Activated naive CD4-positive, alpha-beta T cell treated with anti-CD3 and anti-CD28 coated beads for 36 hours (primary cell): ENCODE measurements at regions of chr14 and their contacts with region 1.

Region 1: GRCh38 chr14:58199726-58200479 is at the start of gene ACTR10:
- DNase-seq: peak; percentile 89
- H3K4me3 Mint-ChIP-seq: peak within 1 kb of the TSS; percentile 93
- H3K27ac Mint-ChIP-seq: peak within 1 kb of the TSS; percentile 87
- H3K4me1 Mint-ChIP-seq: peaks cover 39% of the 10 kb centered on the region
- H3K27me3 Mint-ChIP-seq: no peaks in the 10 kb centered on the region
- total RNA-seq, gene ACTR10: 29.5 to 29.7 TPM

Region 2: GRCh38 chr14:56471056-56471455 is 1728.8 kb before region 1 on chr14:
- CTCF ChIA-PET with region 1: no interaction called
- intact Hi-C with region 1: no loop called
- DNase-seq: no peak
- H3K4me3 Mint-ChIP-seq: no peak overlapping the region
- H3K27ac Mint-ChIP-seq: no peak overlapping the region
- H3K4me1 Mint-ChIP-seq: no peaks in the 10 kb centered on the region
- H3K27me3 Mint-ChIP-seq: peaks cover 13% of the 10 kb centered on the region

Region 3: DNA sequence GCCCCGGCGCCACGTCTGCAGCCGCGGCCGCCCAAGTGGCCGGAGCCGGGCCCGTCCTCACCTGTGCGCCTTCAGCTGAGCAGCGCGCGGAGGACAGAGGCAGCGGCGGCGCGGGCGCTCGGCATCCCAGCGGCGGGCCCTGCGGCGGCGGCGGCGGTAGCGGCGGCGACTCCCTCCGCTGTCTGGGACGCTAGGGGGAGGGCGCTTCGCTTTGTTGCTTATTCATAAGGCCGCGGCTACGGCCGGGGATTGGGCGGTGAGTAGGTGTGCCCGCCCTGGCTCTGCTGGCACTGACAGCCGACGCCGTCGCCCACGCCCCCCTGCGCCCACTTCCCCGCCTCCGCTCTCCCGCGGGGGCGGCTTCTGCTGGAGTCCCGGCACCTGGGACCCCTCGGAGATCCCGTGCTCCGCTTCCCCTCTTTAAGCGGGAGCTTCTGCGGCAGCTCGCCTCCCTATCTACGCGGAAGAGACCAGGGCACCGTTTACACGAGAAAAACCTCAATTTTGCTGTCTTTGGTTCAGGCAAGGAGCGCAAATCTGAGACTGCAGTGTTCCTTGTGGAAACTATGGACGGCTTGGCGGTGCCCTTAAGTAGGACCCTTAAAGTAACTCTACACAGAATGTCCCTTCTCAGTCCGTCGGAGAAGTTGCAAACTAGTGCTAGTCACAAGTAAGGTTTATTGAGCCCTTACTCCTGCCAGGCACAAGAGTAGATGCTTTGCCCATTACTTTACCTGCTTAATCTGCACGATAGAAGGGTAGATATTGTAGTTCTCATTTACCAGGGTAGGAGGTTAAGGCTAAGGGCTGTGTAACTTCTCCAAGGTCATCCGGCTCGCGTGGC is 47.7 kb before region 1 on chr14 and contains the start of gene ARMH4:
- CTCF ChIA-PET with region 1: no interaction called
- intact Hi-C with region 1: loop called (anchors 2 kb)
- DNase-seq: peak; percentile 75
- H3K4me3 Mint-ChIP-seq: peak within 1 kb of the TSS; percentile 70
- H3K27ac Mint-ChIP-seq: no peak within 1 kb of the TSS
- H3K4me1 Mint-ChIP-seq: peaks cover 11% of the 10 kb centered on the region
- H3K27me3 Mint-ChIP-seq: peaks cover 53% of the 10 kb centered on the region
- total RNA-seq, gene ARMH4: 0.43 TPM in 1 of 2 experiments, not detected in the other

Region 4: GRCh38 chr14:58239244-58240195 is 39.6 kb after region 1 on chr14:
- CTCF ChIA-PET with region 1: interaction called, 3 read pairs
- intact Hi-C with region 1: loop called (anchors 1 kb)
- DNase-seq: peak; percentile 88
- H3K4me3 Mint-ChIP-seq: no peak overlapping the region
- H3K27ac Mint-ChIP-seq: no peak overlapping the region
- H3K4me1 Mint-ChIP-seq: peaks cover 22% of the 10 kb centered on the region
- H3K27me3 Mint-ChIP-seq: no peaks in the 10 kb centered on the region

Region 5: GRCh38 chr14:58244556-58245387 is 44.9 kb after region 1 on chr14 and contains the start of gene PSMA3:
- CTCF ChIA-PET with region 1: interaction called, 3 read pairs
- intact Hi-C with region 1: loop called (anchors 1 kb)
- DNase-seq: peak; percentile 99
- H3K4me3 Mint-ChIP-seq: peak within 1 kb of the TSS; percentile 98
- H3K27ac Mint-ChIP-seq: peak within 1 kb of the TSS; percentile 99
- H3K4me1 Mint-ChIP-seq: peaks cover 43% of the 10 kb centered on the region
- H3K27me3 Mint-ChIP-seq: no peaks in the 10 kb centered on the region
- total RNA-seq, gene PSMA3: 399 to 424 TPM

Region 6: DNA sequence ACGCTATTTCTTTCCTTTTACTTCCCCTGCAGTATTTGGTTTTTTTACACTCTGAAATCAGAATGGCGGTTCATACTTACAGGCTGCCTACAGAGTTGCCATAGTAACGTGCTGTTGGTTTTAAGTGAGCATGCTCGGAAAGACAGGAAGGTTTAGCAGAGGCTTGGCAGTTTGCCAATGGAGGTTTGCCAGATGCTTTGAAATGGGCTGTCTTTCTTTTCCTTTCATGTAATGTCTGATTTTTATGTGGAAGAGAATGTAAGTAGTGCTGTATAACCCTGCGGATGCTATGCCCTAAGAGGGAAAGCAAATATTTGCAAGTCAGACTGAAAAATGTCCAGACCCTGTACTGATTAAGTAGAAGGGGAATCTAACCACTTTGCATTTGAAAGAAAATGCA is 131.2 kb after region 1 on chr14:
- CTCF ChIA-PET with region 1: no interaction called
- intact Hi-C with region 1: loop called (anchors 1 kb)
- DNase-seq: peak; percentile 95
- H3K4me3 Mint-ChIP-seq: peak overlapping the region; percentile 73
- H3K27ac Mint-ChIP-seq: peak overlapping the region; percentile 83
- H3K4me1 Mint-ChIP-seq: peaks cover 20% of the 10 kb centered on the region
- H3K27me3 Mint-ChIP-seq: no peaks in the 10 kb centered on the region

Region 7: DNA sequence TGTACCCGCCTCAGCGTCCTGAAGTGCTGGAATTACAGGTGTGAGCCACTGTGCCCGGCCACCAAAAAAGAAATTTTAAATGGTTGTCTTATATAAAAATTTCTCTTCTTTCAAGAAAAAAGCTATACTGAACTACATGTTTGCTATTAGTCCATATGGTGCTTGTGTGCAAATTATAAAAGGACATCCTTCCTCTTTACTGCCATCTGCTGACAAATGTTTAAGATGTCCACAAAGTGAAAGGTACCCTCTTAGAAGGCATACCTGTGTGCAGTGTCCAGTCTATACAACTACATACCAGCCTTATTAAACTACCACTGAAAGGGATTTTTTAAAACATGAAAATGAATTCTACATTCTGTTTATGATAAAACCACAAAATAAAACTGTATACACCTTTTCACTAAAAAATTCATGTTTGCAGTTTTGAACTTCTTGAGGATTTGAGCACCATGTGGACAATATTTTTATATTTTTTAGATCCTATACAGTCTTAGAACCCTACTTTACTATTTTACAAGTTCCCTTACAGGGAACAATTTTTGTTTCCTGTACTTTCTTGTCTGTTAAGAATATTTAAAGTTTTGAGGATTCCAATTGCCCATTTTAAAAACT is 163.0 kb after region 1 on chr14:
- CTCF ChIA-PET with region 1: no interaction called
- intact Hi-C with region 1: loop called (anchors 2 kb)
- DNase-seq: no peak
- H3K4me3 Mint-ChIP-seq: no peak overlapping the region
- H3K27ac Mint-ChIP-seq: no peak overlapping the region
- H3K4me1 Mint-ChIP-seq: peaks cover 2% of the 10 kb centered on the region
- H3K27me3 Mint-ChIP-seq: no peaks in the 10 kb centered on the region